Activated naive CD4-positive, alpha-beta T cell treated with anti-CD3 and anti-CD28 coated beads for 36 hours (primary cell): ENCODE measurements at regions of chr16 and their contacts with region 1.

Region 1: DNA sequence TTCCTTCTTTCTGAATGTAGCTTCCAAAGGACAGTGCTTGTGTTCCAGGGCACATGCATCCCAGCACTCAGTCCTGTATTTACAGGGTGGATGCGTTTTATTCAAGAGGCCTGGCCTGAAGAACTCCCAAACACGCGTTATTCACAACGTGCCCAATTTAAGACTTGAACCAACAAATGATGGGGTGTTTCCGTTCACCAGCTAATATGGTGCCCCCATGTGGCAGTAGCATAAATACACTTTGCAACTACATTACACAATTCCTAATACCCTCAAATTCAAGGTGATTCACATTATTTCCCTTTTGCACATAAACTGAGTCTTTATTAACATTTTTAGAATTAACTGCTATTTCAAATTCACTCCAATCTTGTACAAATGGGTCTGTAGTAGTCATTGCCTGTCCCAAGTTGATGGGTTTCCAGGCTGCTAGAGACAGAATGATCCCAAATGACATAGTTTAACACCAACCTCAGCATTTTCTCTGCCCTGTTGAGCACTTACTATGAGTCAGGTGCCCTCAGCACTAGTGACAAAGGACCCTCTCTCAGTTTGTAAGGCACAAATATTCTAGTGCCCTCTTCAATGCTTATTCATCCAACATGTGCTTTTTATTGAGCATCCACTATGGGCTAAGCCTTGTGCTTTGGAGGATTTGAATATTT is 26.9 kb downstream of the HSD17B2 start:
- DNase-seq: peak; percentile 32
- H3K4me3 Mint-ChIP-seq: no peak overlapping the region
- H3K27ac Mint-ChIP-seq: no peak overlapping the region
- H3K4me1 Mint-ChIP-seq: no peaks in the 10 kb centered on the region
- H3K27me3 Mint-ChIP-seq: peaks cover 13% of the 10 kb centered on the region

Region 2: GRCh38 chr16:81885976-81886586 is 175.9 kb before region 1 on chr16:
- CTCF ChIA-PET with region 1: interaction called, 3 read pairs
- intact Hi-C with region 1: loop called (anchors 1 kb)
- DNase-seq: peak; percentile 35
- H3K4me3 Mint-ChIP-seq: no peak overlapping the region
- H3K27ac Mint-ChIP-seq: no peak overlapping the region
- H3K4me1 Mint-ChIP-seq: no peaks in the 10 kb centered on the region
- H3K27me3 Mint-ChIP-seq: no peaks in the 10 kb centered on the region

Region 3: GRCh38 chr16:81940781-81941560 is 121.0 kb before region 1 on chr16:
- CTCF ChIA-PET with region 1: no interaction called
- intact Hi-C with region 1: loop called (anchors 1 kb)
- DNase-seq: no peak
- H3K4me3 Mint-ChIP-seq: no peak overlapping the region
- H3K27ac Mint-ChIP-seq: no peak overlapping the region
- H3K4me1 Mint-ChIP-seq: no peaks in the 10 kb centered on the region
- H3K27me3 Mint-ChIP-seq: peaks cover 1% of the 10 kb centered on the region

Region 4: GRCh38 chr16:81997738-81998137 is 64.3 kb before region 1 on chr16:
- CTCF ChIA-PET with region 1: no interaction called
- intact Hi-C with region 1: no loop called
- DNase-seq: no peak
- H3K4me3 Mint-ChIP-seq: no peak overlapping the region
- H3K27ac Mint-ChIP-seq: no peak overlapping the region
- H3K4me1 Mint-ChIP-seq: no peaks in the 10 kb centered on the region
- H3K27me3 Mint-ChIP-seq: no peaks in the 10 kb centered on the region

Region 5: DNA sequence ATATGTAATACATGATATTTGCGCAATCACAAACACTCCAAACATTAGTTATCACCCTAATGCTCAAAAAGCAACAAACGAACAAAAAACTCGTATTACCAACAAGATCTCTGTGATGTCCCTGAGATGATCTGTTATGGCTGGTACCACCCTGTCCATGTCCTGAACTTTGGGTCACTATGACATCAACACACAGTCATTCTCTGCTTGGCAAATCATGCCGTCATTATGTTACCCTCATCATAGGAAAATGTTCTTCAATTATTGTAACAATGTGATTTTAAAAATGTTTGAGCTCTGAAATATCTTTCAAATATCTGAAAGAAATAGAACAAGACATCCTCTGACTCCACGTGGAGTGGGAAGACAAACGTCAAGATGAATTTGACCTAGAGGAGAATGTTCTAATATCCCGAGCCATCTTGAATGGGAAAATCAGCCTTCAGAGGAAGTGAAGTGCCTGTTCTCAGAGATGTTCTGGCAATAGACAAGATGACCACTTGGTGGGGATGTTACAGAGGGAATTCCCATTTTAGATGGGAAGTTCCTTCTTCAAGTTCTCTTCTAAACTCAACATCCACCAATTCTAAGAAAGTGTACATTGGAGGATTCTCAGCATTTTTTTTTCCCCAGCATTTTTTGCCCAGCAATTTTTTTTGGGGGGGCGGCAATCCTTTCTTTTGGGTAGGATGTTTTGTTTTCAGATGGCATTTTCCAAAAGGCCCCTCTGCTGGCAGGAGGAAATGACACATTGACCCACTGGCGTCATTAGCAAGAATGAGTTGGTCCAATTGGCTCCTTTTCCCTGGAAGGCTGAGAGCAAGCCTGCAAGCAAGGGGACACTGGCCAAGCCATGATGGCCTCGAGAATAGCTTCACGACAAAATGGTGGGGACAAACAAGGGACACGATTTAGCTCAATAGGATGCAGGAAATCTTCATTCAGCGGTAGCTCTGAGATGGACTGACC is 30.6 kb before region 1 on chr16:
- CTCF ChIA-PET with region 1: no interaction called
- intact Hi-C with region 1: no loop called
- DNase-seq: no peak
- H3K4me3 Mint-ChIP-seq: no peak overlapping the region
- H3K27ac Mint-ChIP-seq: no peak overlapping the region
- H3K4me1 Mint-ChIP-seq: no peaks in the 10 kb centered on the region
- H3K27me3 Mint-ChIP-seq: peaks cover 7% of the 10 kb centered on the region